HCT116 (cell line): ENCODE measurements at regions of chr13 and their contacts with region 1.

Region 1: GRCh38 chr13:80342471-80343380 is 1.8 kb upstream of the SPRY2 start:
- DNase-seq: no peak
- ATAC-seq: peak; percentile 47
- H3K4me3 ChIP-seq: peak overlapping the region; percentile 27 to 55
- H3K27ac ChIP-seq: peak overlapping the region; percentile 24; the same call in 1 of the 2 replicates
- H3K4me1 ChIP-seq: peaks cover 0 to 9% of the 10 kb centered on the region in 2 experiments; a peak in 3 of 4 replicates
- H3K27me3 ChIP-seq: no peaks in the 10 kb centered on the region
- CTCF ChIP-seq: peak; percentile 38 to 74 (median 59); a peak in 5 of 6 replicates
- POLR2A ChIP-seq: no peak
- RAD21 ChIP-seq: peak; percentile 51

Region 2: GRCh38 chr13:79775830-79776229 is 566.9 kb before region 1 on chr13:
- CTCF ChIA-PET with region 1: no interaction called
- POLR2A ChIA-PET with region 1: no interaction called
- RAD21 ChIA-PET with region 1: no interaction called
- intact Hi-C with region 1: loop called (anchors 5 kb)
- DNase-seq: peak; percentile 7
- ATAC-seq: peak; percentile 53; the same call in 1 of the 2 replicates
- H3K4me3 ChIP-seq: no peak overlapping the region
- H3K27ac ChIP-seq: no peak overlapping the region
- H3K4me1 ChIP-seq: no peaks in the 10 kb centered on the region
- H3K27me3 ChIP-seq: no peaks in the 10 kb centered on the region
- CTCF ChIP-seq: peak; percentile 22 to 53 (median 46); a peak in 5 of 6 replicates
- POLR2A ChIP-seq: no peak
- RAD21 ChIP-seq: peak; percentile 61

Region 3: DNA sequence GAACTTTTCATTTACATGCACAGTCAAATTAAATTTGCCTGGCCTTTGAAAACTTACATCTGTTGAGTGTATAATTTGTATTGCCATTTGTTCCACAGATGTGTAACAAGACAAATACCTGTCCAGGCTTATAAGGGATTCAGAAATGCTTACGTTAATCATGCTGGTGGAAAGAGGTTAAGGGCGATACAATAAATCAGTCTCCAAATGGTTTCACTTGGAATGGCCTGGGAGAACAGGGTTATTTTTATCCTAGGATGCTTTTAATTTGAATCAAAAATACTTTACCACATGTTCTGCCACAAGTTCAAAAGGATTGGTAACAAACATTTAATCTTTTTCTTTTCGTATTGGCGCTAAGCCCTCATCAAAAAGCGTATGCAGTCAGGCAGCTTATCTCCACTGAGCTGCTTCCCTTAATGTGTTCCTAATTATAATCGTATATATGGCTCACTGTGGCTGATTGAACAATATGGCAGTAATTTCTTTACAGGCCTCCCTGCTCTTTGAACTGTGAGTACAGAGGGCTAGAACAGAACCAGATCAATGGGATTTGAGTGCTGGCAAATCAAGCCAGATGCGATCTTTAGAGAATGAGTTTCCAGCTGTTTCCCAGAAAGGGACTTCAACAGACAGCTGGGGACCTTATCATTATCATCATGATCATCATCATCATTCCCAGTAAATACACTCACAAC is 427.5 kb before region 1 on chr13:
- CTCF ChIA-PET with region 1: no interaction called
- POLR2A ChIA-PET with region 1: no interaction called
- RAD21 ChIA-PET with region 1: no interaction called
- intact Hi-C with region 1: no loop called
- DNase-seq: no peak
- ATAC-seq: no peak
- H3K4me3 ChIP-seq: no peak overlapping the region
- H3K27ac ChIP-seq: no peak overlapping the region
- H3K4me1 ChIP-seq: no peaks in the 10 kb centered on the region
- H3K27me3 ChIP-seq: no peaks in the 10 kb centered on the region
- CTCF ChIP-seq: no peak
- POLR2A ChIP-seq: no peak
- RAD21 ChIP-seq: no peak

Region 4: GRCh38 chr13:80030491-80030890 is 312.2 kb before region 1 on chr13:
- CTCF ChIA-PET with region 1: no interaction called
- POLR2A ChIA-PET with region 1: no interaction called
- RAD21 ChIA-PET with region 1: no interaction called
- intact Hi-C with region 1: loop called (anchors 5 kb)
- DNase-seq: peak; percentile 18
- ATAC-seq: peak; percentile 93
- H3K4me3 ChIP-seq: no peak overlapping the region
- H3K27ac ChIP-seq: no peak overlapping the region
- H3K4me1 ChIP-seq: peaks cover 0 to 6% of the 10 kb centered on the region in 2 experiments; a peak in 1 of 4 replicates
- H3K27me3 ChIP-seq: no peaks in the 10 kb centered on the region
- CTCF ChIP-seq: peak; percentile 19 to 44 (median 41); a peak in 4 of 6 replicates
- POLR2A ChIP-seq: no peak
- RAD21 ChIP-seq: peak; percentile 52

Region 5: GRCh38 chr13:81017513-81018152 is 674.9 kb after region 1 on chr13:
- CTCF ChIA-PET with region 1: no interaction called
- POLR2A ChIA-PET with region 1: no interaction called
- RAD21 ChIA-PET with region 1: no interaction called
- intact Hi-C with region 1: loop called (anchors 5 kb)
- DNase-seq: peak; percentile 16
- ATAC-seq: no peak
- H3K4me3 ChIP-seq: no peak overlapping the region
- H3K27ac ChIP-seq: no peak overlapping the region
- H3K4me1 ChIP-seq: no peaks in the 10 kb centered on the region
- H3K27me3 ChIP-seq: no peaks in the 10 kb centered on the region
- CTCF ChIP-seq: peak; percentile 16 to 53 (median 27); a peak in 3 of 6 replicates
- POLR2A ChIP-seq: no peak
- RAD21 ChIP-seq: peak; percentile 56